Adrenal gland (tissue), 19 donors: ENCODE measurements at regions of chr2 and their contacts with region 1.

Region 1: DNA sequence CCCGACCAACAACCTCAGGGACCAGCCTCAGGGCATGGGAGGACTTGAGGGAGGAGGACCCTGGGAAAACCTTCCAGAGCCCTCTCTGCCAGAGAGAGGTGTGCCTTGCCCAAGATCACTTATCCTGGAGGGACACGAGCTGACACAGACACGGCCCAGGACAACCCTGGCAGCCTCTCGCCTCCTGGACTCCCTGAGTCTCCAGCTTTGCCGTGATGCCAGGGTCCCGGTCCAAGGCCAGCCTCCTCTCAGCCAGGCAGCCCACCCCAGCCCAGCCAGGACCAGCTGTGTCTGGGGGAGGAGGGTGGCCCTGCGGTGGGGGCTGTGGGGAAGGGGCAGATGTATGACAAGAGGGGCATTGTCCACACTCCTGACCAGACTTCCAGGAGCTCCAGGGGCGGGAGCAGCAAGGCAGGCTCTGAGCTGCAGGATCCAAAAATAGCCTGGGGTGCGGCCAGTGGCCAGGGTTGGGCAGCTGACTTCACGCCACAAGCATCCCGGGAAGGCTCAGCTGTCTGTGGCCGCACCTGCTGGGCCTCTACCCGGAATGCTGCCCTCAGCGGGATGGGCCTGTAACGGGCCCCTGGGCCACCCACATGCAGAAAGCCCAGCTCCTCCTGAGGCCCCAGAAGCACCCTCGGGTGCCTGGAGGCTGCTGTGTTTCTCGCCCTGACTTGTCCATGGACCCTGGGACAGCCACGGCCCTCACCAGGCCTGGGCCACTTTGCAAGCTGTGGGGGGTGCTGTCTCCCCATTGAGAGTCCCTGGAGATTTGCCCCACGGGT is 65.5 kb upstream of the GPC1 start:
- DNase-seq: peak; percentile 71 to 92 (median 88)
- H3K4me3 ChIP-seq: no peak overlapping the region
- H3K27ac ChIP-seq: peak overlapping the region; percentile 46 to 89 (median 87)
- H3K4me1 ChIP-seq: peaks cover 21 to 37% of the 10 kb centered on the region in 2 donors
- H3K27me3 ChIP-seq: no peaks in the 10 kb centered on the region
- CTCF ChIP-seq: no peak
- POLR2A ChIP-seq: peak in 1 of 2 donors; percentile 61

Region 2: DNA sequence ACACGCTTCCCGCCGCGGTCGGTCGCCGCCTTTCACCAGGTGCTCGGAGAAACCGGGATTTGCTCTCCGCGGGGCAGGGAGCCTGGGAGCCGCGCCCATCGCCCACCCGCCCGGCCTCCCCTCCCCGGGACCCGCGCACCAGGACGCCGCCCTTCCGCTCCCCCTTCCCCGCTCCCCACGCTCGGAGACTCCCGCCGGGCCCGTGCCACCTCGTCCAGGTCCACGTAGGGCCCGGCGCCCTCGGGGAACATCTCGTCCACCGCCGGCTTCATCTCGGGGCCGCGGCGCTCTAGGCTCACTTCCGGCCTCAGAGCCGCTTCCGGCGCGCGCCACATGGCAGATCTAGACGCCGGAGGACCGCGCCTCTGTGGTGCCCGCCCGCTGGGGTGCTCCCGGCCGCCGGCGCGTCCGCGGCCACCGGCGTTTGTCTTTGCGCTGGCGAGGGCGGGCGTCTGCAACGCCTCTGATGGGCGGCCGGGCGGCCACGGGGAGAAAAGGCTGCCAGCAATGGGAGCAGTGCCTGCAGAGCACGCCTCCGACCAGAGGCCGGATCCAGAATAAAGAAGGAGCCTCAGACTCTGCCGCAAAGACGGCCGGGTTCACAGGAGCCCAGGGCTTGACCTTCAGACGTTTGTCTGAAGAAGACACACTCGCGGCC is 233.9 kb before region 1 on chr2 and contains the start of gene COPS9:
- intact Hi-C with region 1: no loop called
- DNase-seq: peak; percentile 82 to 91 (median 85)
- H3K4me3 ChIP-seq: peak within 1 kb of the TSS; percentile 62 to 100 (median 88)
- H3K27ac ChIP-seq: peak within 1 kb of the TSS in 1 of 5 donors; percentile 82
- H3K4me1 ChIP-seq: peaks cover 6 to 11% of the 10 kb centered on the region in 2 donors
- H3K27me3 ChIP-seq: no peaks in the 10 kb centered on the region
- CTCF ChIP-seq: no peak
- POLR2A ChIP-seq: peak; percentile 35 to 52
- total RNA-seq, gene COPS9: 123 to 469 (median 149) TPM

Region 3: GRCh38 chr2:240250985-240251847 is 118.8 kb before region 1 on chr2:
- intact Hi-C with region 1: loop called in 1 of 2 experiments (anchors 10 kb)
- DNase-seq: peak; percentile 92 to 99 (median 98)
- H3K4me3 ChIP-seq: no peak overlapping the region
- H3K27ac ChIP-seq: peak overlapping the region; percentile 89 to 99 (median 91)
- H3K4me1 ChIP-seq: peaks cover 21 to 35% of the 10 kb centered on the region in 2 donors
- H3K27me3 ChIP-seq: no peaks in the 10 kb centered on the region
- CTCF ChIP-seq: no peak
- POLR2A ChIP-seq: peak in 1 of 2 donors; percentile 83

Region 4: DNA sequence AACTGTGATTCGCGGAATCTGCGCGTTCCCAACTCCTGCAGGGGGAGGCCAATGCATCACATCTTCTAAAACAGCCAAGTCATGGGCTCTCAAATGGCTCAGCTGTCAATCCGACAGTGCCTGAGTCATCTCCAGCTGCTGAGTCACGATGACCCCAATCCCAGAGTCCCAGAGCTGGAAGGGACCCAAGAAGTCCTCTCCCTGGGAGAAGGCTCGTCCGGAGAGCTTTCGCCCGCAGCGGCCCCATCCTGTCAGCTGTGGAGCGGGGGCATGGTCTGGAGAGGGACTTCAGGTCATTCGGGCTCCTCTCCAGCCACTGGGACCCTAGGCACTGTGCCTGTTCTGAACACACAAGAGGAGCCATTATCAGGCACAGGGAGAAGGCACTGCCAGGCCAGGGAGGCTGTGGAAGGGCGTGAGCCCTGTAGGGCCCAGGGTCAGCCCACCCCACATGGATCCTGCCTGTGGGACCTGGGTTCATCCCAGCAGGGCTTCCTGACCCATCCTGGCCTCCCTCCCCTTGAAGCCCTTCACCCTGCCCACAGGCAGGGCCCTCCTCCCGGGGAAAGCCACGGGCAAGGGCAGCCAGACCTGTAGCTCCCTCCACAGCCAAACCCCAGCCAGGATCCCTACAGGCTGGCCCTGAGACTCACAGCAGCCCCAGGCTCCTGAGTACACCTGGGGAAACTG is 17.8 kb after region 1 on chr2:
- intact Hi-C with region 1: no loop called
- DNase-seq: peak; percentile 90 to 97 (median 96)
- H3K4me3 ChIP-seq: no peak overlapping the region
- H3K27ac ChIP-seq: peak overlapping the region in 4 of 5 donors; percentile 39 to 76 (median 64)
- H3K4me1 ChIP-seq: peaks cover 7 to 11% of the 10 kb centered on the region in 2 donors
- H3K27me3 ChIP-seq: no peaks in the 10 kb centered on the region
- CTCF ChIP-seq: peak in 2 of 6 experiments; percentile 21 to 41
- POLR2A ChIP-seq: peak in 1 of 2 donors; percentile 25